Esophagus squamous epithelium (tissue), 5 donors: ENCODE measurements at regions of chr11 and their contacts with region 1.

Region 1: DNA sequence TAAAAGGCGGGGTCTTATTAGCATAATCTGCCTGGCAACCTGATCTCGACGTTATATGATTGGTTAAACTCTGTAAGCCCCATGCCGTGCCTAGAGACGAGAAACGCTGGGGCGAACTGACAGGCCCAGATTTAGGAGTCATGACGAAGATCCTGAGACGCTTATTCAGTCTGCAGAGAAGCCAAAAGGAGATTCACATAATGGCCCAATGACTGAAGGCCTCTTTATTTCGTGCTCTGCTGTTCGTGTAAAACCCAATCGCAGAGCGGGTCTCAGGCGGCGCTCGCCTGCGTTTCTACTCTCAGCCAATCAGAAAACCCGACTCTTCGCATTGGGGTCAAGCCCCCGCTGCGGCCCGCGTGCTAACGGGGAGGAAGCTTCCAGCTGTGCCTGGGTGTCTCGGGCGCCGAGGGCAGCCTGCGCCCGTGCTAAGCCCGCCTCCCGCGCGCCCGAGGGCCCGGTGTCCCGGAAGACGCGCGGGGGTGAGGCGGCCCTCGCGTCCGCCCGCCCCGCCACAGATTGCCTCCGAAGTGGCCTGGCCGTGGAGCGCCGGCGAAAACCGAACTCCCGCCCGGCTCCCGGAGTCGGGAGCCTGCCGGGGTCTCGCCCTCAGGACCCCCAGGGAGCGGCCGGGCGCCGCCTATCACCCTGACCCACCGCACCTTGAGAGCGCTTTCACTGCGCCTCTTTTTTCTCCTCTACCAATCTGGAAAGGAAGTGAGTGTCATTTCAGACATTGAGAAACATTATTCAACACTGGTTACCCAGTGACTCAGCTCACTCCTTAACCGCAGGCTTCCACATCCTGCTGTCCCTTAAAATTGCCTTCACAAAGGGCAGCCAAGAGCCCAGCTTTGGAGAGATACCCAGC is 446 bp upstream of the PRDM10 start:
- DNase-seq: peak; percentile 86
- H3K4me3 ChIP-seq: peak overlapping the region; percentile 73 to 94 (median 90)
- H3K27ac ChIP-seq: peak overlapping the region; percentile 99 to 100 (median 100)
- H3K4me1 ChIP-seq: peaks cover 12 to 38% (median 17%) of the 10 kb centered on the region in 3 donors
- H3K27me3 ChIP-seq: no peaks in the 10 kb centered on the region
- CTCF ChIP-seq: no peak
- POLR2A ChIP-seq: peak in 3 of 4 donors; percentile 85 to 90 (median 86)

Region 2: GRCh38 chr11:130069684-130070108 is 66.6 kb after region 1 on chr11 and contains the start of gene APLP2:
- intact Hi-C with region 1: loop called (anchors 5 kb)
- DNase-seq: peak; percentile 98
- H3K4me3 ChIP-seq: peak within 1 kb of the TSS; percentile 77 to 93 (median 88)
- H3K27ac ChIP-seq: peak within 1 kb of the TSS; percentile 95 to 98 (median 97)
- H3K4me1 ChIP-seq: peaks cover 8 to 48% (median 17%) of the 10 kb centered on the region in 3 donors
- H3K27me3 ChIP-seq: no peaks in the 10 kb centered on the region
- CTCF ChIP-seq: no peak
- POLR2A ChIP-seq: peak in 2 of 4 donors; percentile 94
- total RNA-seq, gene APLP2: 134 to 221 (median 177) TPM